ENCODE measurements at regions of chr19 and their contacts with region 1.

Region 1: DNA sequence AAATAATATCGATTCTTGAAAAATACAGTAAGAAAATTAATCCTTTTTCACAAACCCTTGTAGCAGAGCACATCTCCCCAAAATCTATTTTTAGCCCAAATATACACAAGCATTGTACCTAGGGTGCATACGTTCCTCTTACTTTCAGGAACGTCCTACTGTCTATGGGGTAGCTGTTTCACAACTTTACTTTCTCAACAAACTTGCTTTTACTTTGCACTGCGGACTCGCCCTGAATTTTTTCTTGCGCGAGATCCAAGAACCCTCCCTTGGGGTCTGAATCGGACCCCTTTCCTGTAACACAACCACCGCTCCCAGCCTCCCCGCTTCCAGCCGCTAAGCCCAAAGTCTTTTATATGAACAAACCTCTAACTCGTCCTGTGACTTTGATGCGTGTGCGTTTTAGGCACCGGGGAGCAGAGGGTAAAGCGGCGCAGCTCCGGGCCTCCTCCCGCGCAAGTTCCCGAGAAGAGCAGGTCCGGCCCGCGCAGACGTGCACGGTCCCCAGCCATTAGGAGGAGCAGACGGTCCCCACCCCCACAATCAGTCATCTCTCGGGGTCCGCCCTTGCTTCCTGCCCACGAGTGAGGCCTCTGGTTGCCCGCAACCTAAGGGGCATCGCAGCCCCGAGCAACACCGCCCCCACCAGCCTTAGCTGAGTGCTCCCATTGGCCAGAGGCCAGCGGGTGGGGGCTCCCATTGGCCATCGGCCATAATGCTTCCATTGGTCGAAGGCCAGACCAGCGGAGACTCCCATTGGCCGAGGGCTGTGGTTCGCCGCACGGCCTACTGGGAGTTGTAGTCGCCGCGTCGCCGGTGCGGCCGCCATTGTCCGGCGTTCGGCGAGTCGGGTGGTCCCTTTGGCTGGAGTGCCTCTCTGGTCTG is at the start of gene ZNF8:
- DNase-seq: peak; percentile 99
- H3K4me3 Mint-ChIP-seq: peak within 1 kb of the TSS; percentile 99
- H3K27ac Mint-ChIP-seq: peak within 1 kb of the TSS; percentile 97
- H3K4me1 Mint-ChIP-seq: peaks cover 26% of the 10 kb centered on the region
- H3K27me3 Mint-ChIP-seq: no peaks in the 10 kb centered on the region
- total RNA-seq, gene ZNF8: 4.8 and 5.1 TPM in 2 replicates

Region 2: DNA sequence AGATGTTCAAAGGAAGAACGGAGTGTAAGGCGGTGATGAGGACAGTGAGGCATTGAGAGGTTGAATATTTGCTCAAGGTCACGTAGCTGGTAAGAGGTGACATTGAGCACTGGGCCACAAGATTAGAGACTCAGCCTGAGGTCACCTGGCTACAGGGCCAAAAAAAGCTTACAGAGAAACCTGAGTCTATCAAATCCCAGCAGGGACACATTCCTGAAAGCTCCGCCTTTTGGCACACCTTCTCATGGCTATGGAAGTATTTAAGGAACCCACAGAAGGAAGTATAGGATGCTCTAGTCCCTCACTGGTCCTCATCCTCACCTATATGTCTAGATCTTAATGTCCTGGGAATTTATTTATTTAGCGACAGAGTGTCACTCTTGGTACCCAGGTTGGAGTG is 491.5 kb before region 1 on chr19:
- intact Hi-C with region 1: no loop called
- DNase-seq: no peak
- H3K4me3 Mint-ChIP-seq: no peak overlapping the region
- H3K27ac Mint-ChIP-seq: no peak overlapping the region
- H3K4me1 Mint-ChIP-seq: no peaks in the 10 kb centered on the region
- H3K27me3 Mint-ChIP-seq: no peaks in the 10 kb centered on the region

Region 3: DNA sequence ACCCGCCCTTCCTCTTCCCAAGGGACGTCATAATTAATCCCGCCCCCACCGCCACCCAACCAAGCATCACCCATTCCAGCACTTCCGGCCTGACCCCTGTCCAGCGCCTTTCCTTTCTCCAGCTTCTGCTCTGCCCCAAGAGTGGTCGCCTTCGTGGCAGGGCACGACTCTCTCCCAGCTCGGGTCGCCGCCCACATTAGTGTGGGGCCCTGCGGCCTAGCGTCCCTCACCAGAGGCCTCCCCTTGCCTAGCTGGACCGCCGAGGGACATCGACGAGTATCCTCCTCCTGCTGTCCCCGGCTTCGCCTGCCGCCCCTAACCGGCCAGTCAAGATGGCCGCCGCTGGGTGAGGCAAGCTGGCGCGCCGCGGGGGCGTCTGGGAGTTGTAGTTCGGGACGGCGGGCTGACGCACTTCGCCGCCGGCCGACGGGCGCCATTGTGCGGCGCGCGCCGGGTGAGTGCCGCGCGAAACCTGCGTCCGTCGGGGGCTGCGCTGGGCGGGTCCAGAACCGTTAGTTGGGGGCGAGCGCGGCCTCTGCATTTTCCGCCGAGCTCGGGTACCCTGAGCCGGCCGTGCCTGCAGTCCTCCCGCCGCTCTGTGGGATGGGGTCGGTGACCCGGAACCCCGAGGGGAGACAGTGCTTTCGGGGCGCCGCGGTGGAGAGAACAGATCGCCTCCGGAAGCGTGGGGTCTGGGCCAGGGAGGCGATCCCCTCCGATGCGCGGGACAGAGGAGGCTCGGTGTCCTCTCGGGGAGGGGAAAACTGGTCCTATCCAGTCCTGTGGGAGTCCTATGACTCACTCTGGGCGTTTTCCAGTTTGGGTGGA is 95.2 kb before region 1 on chr19 and contains the start of gene ZNF274:
- intact Hi-C with region 1: loop called (anchors 1 kb)
- DNase-seq: peak; percentile 98
- H3K4me3 Mint-ChIP-seq: peak within 1 kb of the TSS; percentile 97
- H3K27ac Mint-ChIP-seq: peak within 1 kb of the TSS; percentile 96
- H3K4me1 Mint-ChIP-seq: peaks cover 13% of the 10 kb centered on the region
- H3K27me3 Mint-ChIP-seq: no peaks in the 10 kb centered on the region
- total RNA-seq, gene ZNF274: 19.4 and 19.8 TPM in 2 replicates

Region 4: GRCh38 chr19:58228585-58229254 is 49.7 kb before region 1 on chr19 and contains the start of gene ZNF544:
- intact Hi-C with region 1: loop called (anchors 2 kb)
- DNase-seq: peak; percentile 89
- H3K4me3 Mint-ChIP-seq: peak within 1 kb of the TSS; percentile 95
- H3K27ac Mint-ChIP-seq: peak within 1 kb of the TSS; percentile 95
- H3K4me1 Mint-ChIP-seq: peaks cover 26% of the 10 kb centered on the region
- H3K27me3 Mint-ChIP-seq: no peaks in the 10 kb centered on the region
- total RNA-seq, gene ZNF544: 52.9 and 55.5 TPM in 2 replicates

Region 5: GRCh38 chr19:58439576-58440554 is 161.5 kb after region 1 on chr19 and contains the start of gene ZNF132:
- intact Hi-C with region 1: loop called (anchors 1 kb)
- DNase-seq: peak; percentile 98
- H3K4me3 Mint-ChIP-seq: peak within 1 kb of the TSS; percentile 97
- H3K27ac Mint-ChIP-seq: peak within 1 kb of the TSS; percentile 97
- H3K4me1 Mint-ChIP-seq: peaks cover 21% of the 10 kb centered on the region
- H3K27me3 Mint-ChIP-seq: no peaks in the 10 kb centered on the region
- total RNA-seq, gene ZNF132: 3.6 and 3.8 TPM in 2 replicates

Region 6: DNA sequence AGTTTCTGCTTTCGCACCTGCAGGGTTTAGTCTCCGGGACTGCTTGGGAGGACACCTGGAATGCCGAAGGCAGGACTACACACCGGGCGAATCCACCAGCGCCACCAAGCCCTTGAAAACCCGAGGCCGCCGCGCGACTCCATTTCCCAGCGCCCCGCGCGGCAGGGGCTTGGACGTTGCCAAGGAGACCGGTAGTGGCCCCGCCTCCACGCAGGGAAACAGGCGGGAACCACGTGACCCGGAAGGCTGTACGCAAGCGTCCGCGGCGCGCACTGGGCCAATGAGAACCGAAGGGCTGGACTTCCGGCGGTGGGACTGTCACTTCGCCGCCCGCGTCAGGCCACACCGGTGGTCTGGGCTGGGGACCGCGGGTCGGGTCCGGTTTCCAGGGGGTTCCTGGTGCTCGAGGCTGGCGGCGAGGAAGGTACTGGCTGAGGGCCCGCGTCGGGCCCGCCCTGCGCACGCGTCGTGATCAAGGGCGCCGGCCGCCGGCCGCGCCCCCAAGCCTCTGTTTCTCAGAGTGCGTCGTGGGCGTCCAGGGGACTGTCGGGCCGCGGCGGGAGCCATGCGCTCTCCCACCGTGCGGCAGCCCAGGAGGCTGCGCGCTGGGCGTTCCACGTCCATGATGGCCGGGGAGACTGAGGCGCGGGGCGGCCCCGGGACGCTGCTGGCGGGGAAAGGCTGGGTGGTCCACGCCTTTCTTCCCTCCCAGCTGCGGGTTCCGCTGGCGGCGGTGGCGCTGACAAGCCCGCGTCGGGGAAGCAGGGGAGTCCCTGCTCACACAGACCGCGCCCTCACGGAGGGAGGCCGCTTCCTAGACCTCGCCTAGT is 188.6 kb after region 1 on chr19 and contains the start of gene ZNF324:
- intact Hi-C with region 1: loop called (anchors 2 kb)
- DNase-seq: peak; percentile 100
- H3K4me3 Mint-ChIP-seq: peak within 1 kb of the TSS; percentile 89
- H3K27ac Mint-ChIP-seq: peak within 1 kb of the TSS; percentile 84
- H3K4me1 Mint-ChIP-seq: peaks cover 15% of the 10 kb centered on the region
- H3K27me3 Mint-ChIP-seq: peaks cover 2% of the 10 kb centered on the region
- total RNA-seq, gene ZNF324: 13.6 and 14.7 TPM in 2 replicates